T-cell (primary cell): ENCODE measurements at regions of chr1 and their contacts with region 1.

Region 1: DNA sequence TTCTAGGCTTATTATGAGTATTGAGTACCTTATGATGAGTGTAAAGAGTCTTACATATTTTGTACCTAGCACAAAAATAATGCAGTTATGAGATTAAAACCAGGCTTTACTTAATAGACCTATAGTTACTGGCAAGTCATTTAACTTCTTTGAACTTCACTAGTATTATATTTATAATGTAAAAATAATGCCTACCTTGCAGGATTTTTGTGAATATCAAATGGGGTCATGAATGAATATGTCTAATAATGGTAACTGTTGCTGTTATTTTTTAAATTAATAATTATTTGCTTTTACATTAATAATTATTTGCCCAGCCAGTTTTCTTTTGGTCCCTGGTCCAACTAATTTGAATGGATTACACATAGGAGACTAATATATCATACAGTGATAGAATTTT is 242.5 kb downstream of the GPR52 start:
- DNase-seq: no peak
- ATAC-seq: no peak
- H3K4me3 ChIP-seq: no peak overlapping the region
- H3K4me3 Mint-ChIP-seq: no peak overlapping the region
- H3K27ac ChIP-seq: no peak overlapping the region
- H3K27ac Mint-ChIP-seq: no peak overlapping the region
- H3K4me1 ChIP-seq: no peaks in the 10 kb centered on the region
- H3K4me1 Mint-ChIP-seq: peaks cover 0 to 3% (median 3%) of the 10 kb centered on the region in 3 donors
- H3K27me3 ChIP-seq: no peaks in the 10 kb centered on the region
- H3K27me3 Mint-ChIP-seq: no peaks in the 10 kb centered on the region

Region 2: DNA sequence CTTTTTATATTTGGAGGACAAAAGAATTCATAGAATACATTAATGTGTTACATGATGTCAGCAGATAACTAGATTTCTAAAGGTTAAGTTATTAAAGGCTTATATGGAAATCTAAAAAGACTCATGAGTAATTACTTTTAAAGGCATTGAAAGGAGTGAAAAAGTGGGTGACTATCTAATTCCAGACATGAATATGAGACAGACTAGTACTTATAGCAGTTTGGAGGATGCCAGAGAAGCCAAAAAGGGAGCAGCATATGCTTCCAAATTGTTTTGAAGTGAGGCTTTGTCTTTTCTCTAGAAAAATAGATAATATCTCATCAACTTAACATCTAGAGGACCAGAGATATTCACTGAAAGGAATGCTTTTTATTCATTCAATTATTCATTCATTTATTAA is 34.0 kb after region 1 on chr1:
- CTCF ChIA-PET with region 1: no interaction called
- POLR2A ChIA-PET with region 1: no interaction called
- DNase-seq: no peak
- ATAC-seq: no peak
- H3K4me3 ChIP-seq: no peak overlapping the region
- H3K4me3 Mint-ChIP-seq: no peak overlapping the region
- H3K27ac ChIP-seq: no peak overlapping the region
- H3K27ac Mint-ChIP-seq: no peak overlapping the region
- H3K4me1 ChIP-seq: no peaks in the 10 kb centered on the region
- H3K4me1 Mint-ChIP-seq: peaks cover 0 to 2% (median 0%) of the 10 kb centered on the region in 3 donors
- H3K27me3 ChIP-seq: no peaks in the 10 kb centered on the region
- H3K27me3 Mint-ChIP-seq: no peaks in the 10 kb centered on the region

Region 3: GRCh38 chr1:175848329-175848728 is 1158.1 kb after region 1 on chr1:
- CTCF ChIA-PET with region 1: interaction called in 1 of 2 experiments, 11 read pairs
- POLR2A ChIA-PET with region 1: no interaction called
- DNase-seq: no peak
- ATAC-seq: no peak
- H3K4me3 ChIP-seq: no peak overlapping the region
- H3K4me3 Mint-ChIP-seq: no peak overlapping the region
- H3K27ac ChIP-seq: no peak overlapping the region
- H3K27ac Mint-ChIP-seq: no peak overlapping the region
- H3K4me1 ChIP-seq: no peaks in the 10 kb centered on the region
- H3K4me1 Mint-ChIP-seq: no peaks in the 10 kb centered on the region
- H3K27me3 ChIP-seq: peaks cover 0 to 3% of the 10 kb centered on the region in 2 experiments
- H3K27me3 Mint-ChIP-seq: peaks cover 16 to 20% of the 10 kb centered on the region in 2 donors